Activated T-helper 2 cell treated with anti-CD3 and anti-CD28 coated beads, Interferon-gamma antibody, Interleukin-2, Interleukin-4, amounts not matched to agents 10 μg/mL and 5 μg/mL and 100 μg/mL, durations not matched to agents 14 hours and 24 hours and 36 hours (primary cell): ENCODE measurements at regions of chr12 and their contacts with region 1.

Region 1: GRCh38 chr12:120797677-120798642 is 72.3 kb downstream of the ACADS start:
- DNase-seq: no peak
- H3K4me3 Mint-ChIP-seq: no peak overlapping the region
- H3K27ac Mint-ChIP-seq: peak overlapping the region; percentile 77
- H3K4me1 Mint-ChIP-seq: peaks cover 51% of the 10 kb centered on the region
- H3K27me3 Mint-ChIP-seq: no peaks in the 10 kb centered on the region

Region 2: GRCh38 chr12:120820885-120821510 is 23.0 kb after region 1 on chr12:
- intact Hi-C with region 1: loop called (anchors 2 kb)
- DNase-seq: peak; percentile 30
- H3K4me3 Mint-ChIP-seq: no peak overlapping the region
- H3K27ac Mint-ChIP-seq: peak overlapping the region; percentile 67
- H3K4me1 Mint-ChIP-seq: peaks cover 29% of the 10 kb centered on the region
- H3K27me3 Mint-ChIP-seq: no peaks in the 10 kb centered on the region

Region 3: DNA sequence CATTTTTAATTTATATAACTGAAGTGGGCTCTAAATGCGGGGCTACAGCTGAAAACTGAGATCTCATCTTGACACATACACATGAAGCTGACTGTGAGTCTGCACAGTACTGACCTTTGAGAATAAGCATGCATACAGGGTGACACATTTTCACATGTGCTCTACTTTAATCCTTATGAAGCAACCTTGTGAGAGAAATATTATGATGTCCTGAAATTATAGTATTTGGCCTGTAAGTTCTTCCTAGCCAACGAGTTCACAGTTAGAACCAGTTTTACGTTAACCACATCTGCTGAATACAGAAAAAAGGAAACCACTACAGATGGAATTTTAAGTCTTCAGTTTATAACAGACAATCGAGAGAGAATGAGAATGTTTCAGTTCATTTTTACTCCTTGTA is 35.9 kb after region 1 on chr12:
- intact Hi-C with region 1: loop called (anchors 5 kb)
- DNase-seq: no peak
- H3K4me3 Mint-ChIP-seq: peak overlapping the region; percentile 38
- H3K27ac Mint-ChIP-seq: peak overlapping the region; percentile 79
- H3K4me1 Mint-ChIP-seq: peaks cover 53% of the 10 kb centered on the region
- H3K27me3 Mint-ChIP-seq: no peaks in the 10 kb centered on the region

Region 4: GRCh38 chr12:120944645-120945231 is 146.8 kb after region 1 on chr12:
- intact Hi-C with region 1: no loop called
- DNase-seq: peak; percentile 46
- H3K4me3 Mint-ChIP-seq: no peak overlapping the region
- H3K27ac Mint-ChIP-seq: peak overlapping the region; percentile 20
- H3K4me1 Mint-ChIP-seq: peaks cover 8% of the 10 kb centered on the region
- H3K27me3 Mint-ChIP-seq: peaks cover 6% of the 10 kb centered on the region